ENCODE measurements at regions of chr9 and their contacts with region 1.

Region 1: GRCh38 chr9:37197158-37198038 is 77.0 kb downstream of the ZCCHC7 start:
- DNase-seq: peak; percentile 79
- ATAC-seq: peak; percentile 70
- H3K4me3 ChIP-seq: no peak overlapping the region; the same call in 1 of the 2 replicates
- H3K27ac ChIP-seq: peak overlapping the region; percentile 61
- H3K4me1 ChIP-seq: peaks cover 47% of the 10 kb centered on the region
- H3K27me3 ChIP-seq: no peaks in the 10 kb centered on the region
- CTCF ChIP-seq: no peak
- EP300 ChIP-seq: peak; percentile 34 to 55; a peak in 1 of 4 replicates
- POLR2A ChIP-seq: no peak
- RAD21 ChIP-seq: 0 out of 2 replicates have a peak, but pooled peaks have one; percentile 14

Region 2: GRCh38 chr9:37149666-37150308 is 47.6 kb before region 1 on chr9:
- CTCF ChIA-PET with region 1: interaction called, 4 read pairs
- POLR2A ChIA-PET with region 1: interaction called, 7 read pairs
- RAD21 ChIA-PET with region 1: interaction called, 62 read pairs
- SMC1A ChIA-PET with region 1: interaction called, 14 read pairs
- in situ Hi-C with region 1: loop called (anchors 5 kb)
- intact Hi-C with region 1: no loop called
- DNase-seq: no peak
- ATAC-seq: no peak
- H3K4me3 ChIP-seq: no peak overlapping the region
- H3K27ac ChIP-seq: no peak overlapping the region
- H3K4me1 ChIP-seq: peaks cover 9% of the 10 kb centered on the region; the same call in 1 of the 2 replicates
- H3K27me3 ChIP-seq: no peaks in the 10 kb centered on the region
- CTCF ChIP-seq: no peak
- EP300 ChIP-seq: no peak
- POLR2A ChIP-seq: no peak
- RAD21 ChIP-seq: no peak

Region 3: DNA sequence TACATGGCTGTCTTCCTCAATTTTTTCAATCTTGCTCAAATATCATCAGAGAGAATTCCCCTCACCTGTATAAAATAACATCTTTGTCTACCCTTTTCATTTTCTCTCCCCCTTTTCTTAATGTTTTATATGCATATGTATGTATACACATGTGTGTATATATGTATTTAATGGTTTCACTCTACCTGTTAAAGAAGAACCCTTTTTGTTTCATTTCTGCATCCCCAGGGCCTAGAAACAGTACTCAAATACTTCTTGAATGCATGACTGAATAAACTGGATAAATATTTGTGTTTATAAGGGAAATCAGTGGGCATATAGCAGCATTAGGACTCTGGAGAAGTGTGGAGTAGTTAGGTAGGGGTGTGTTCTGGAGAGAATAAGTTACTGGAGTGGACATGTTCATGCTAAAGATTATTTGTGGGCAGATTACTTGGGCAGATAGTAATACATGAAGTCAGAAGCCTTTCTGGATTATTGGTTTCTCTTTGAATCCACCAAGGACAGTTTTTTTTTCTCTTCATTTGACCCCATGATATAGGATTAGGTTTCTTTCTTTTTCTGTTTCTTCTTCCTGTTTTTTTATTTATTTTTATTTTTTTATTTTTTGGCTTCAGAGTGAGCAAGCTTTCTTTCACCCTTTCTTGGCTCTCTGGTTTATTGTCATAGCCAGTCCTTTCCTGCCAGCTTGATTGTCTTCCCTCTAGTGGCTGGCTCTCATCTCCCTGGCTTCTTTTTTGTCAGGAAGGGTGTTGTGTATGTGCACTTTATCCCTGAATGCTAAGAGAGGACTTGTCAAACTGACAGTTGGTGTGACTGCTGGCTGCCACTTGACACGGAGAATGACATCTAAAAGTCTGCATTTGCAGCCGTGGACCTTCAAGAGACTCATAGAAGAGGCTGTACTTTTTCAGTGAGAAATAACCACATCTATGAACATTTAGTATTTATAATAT is 12.3 kb after region 1 on chr9:
- CTCF ChIA-PET with region 1: interaction called, 10 read pairs
- POLR2A ChIA-PET with region 1: interaction called, 18 read pairs
- RAD21 ChIA-PET with region 1: interaction called, 17 read pairs
- SMC1A ChIA-PET with region 1: interaction called, 48 read pairs
- in situ Hi-C with region 1: no loop called
- intact Hi-C with region 1: no loop called
- DNase-seq: no peak
- ATAC-seq: peak; percentile 51
- H3K4me3 ChIP-seq: no peak overlapping the region
- H3K27ac ChIP-seq: peak overlapping the region; percentile 73
- H3K4me1 ChIP-seq: peaks cover 31% of the 10 kb centered on the region
- H3K27me3 ChIP-seq: no peaks in the 10 kb centered on the region
- CTCF ChIP-seq: peak in 2 of 3 experiments; percentile 16 to 21; a peak in 3 of 6 replicates
- EP300 ChIP-seq: no peak
- POLR2A ChIP-seq: no peak
- RAD21 ChIP-seq: peak; percentile 22; the same call in 1 of the 2 replicates

Region 4: DNA sequence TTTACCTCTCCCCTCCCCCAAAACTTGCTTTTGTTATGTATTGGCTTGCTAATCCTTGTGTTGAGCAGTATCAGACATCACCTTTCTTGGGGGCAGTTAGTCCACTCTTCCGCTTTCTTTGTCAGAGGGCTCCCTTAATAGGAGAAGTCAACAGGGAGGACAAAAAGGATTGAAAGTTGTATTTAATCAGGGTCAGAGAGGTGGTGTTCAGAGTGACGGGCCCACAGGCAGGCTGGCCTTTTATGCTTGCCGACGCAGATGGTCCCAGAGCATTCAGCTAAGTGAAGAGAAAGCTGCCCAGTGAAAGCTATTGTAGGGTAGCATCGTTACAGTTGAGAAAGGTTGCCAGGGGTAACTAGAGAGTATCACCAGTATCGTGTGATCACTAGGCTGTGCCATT is 54.1 kb after region 1 on chr9:
- CTCF ChIA-PET with region 1: no interaction called
- POLR2A ChIA-PET with region 1: interaction called, 3 read pairs
- RAD21 ChIA-PET with region 1: interaction called, 9 read pairs
- SMC1A ChIA-PET with region 1: interaction called, 5 read pairs
- in situ Hi-C with region 1: loop called (anchors 5 kb)
- intact Hi-C with region 1: no loop called
- DNase-seq: no peak
- ATAC-seq: peak; percentile 97
- H3K4me3 ChIP-seq: no peak overlapping the region
- H3K27ac ChIP-seq: peak overlapping the region; percentile 14; the same call in 1 of the 2 replicates
- H3K4me1 ChIP-seq: peaks cover 5% of the 10 kb centered on the region
- H3K27me3 ChIP-seq: no peaks in the 10 kb centered on the region
- CTCF ChIP-seq: no peak
- EP300 ChIP-seq: no peak
- POLR2A ChIP-seq: no peak
- RAD21 ChIP-seq: no peak

Region 5: GRCh38 chr9:37302277-37302676 is 104.9 kb after region 1 on chr9:
- CTCF ChIA-PET with region 1: interaction called, 7 read pairs
- POLR2A ChIA-PET with region 1: interaction called, 9 read pairs
- RAD21 ChIA-PET with region 1: interaction called, 32 read pairs
- SMC1A ChIA-PET with region 1: interaction called, 46 read pairs
- in situ Hi-C with region 1: no loop called
- intact Hi-C with region 1: no loop called
- DNase-seq: peak; percentile 90
- ATAC-seq: peak; percentile 91
- H3K4me3 ChIP-seq: peak overlapping the region; percentile 43; the same call in 1 of the 2 replicates
- H3K27ac ChIP-seq: peak overlapping the region; percentile 95
- H3K4me1 ChIP-seq: peaks cover 48% of the 10 kb centered on the region
- H3K27me3 ChIP-seq: no peaks in the 10 kb centered on the region
- CTCF ChIP-seq: no peak
- EP300 ChIP-seq: peak; percentile 82 to 93
- POLR2A ChIP-seq: no peak
- RAD21 ChIP-seq: peak; percentile 31; the same call in 1 of the 2 replicates

Measured in GM12878 (cell line).